CD4-positive, alpha-beta memory T cell (primary cell): ENCODE measurements at regions of chr1 and their contacts with region 1.

Region 1: GRCh38 chr1:35451125-35451528 is 106.1 kb downstream of the KIAA0319L start:
- DNase-seq: peak; percentile 66 to 75 (median 73)
- H3K4me3 ChIP-seq: no peak overlapping the region
- H3K4me3 Mint-ChIP-seq: peak overlapping the region in 5 of 8 donors; percentile 22 to 87 (median 42)
- H3K27ac ChIP-seq: no peak overlapping the region
- H3K27ac Mint-ChIP-seq: peak overlapping the region; percentile 50 to 95 (median 90)
- H3K4me1 ChIP-seq: peaks cover 26% of the 10 kb centered on the region
- H3K4me1 Mint-ChIP-seq: peaks cover 28 to 39% (median 32%) of the 10 kb centered on the region in 4 donors
- H3K27me3 ChIP-seq: no peaks in the 10 kb centered on the region
- H3K27me3 Mint-ChIP-seq: no peaks in the 10 kb centered on the region

Region 2: GRCh38 chr1:35466120-35466519 is 15.0 kb after region 1 on chr1:
- CTCF ChIA-PET with region 1: interaction called, 10 read pairs
- POLR2A ChIA-PET with region 1: interaction called, 3 read pairs
- intact Hi-C with region 1: no loop called
- DNase-seq: no peak
- H3K4me3 ChIP-seq: no peak overlapping the region
- H3K4me3 Mint-ChIP-seq: no peak overlapping the region
- H3K27ac ChIP-seq: no peak overlapping the region
- H3K27ac Mint-ChIP-seq: peak overlapping the region in 3 of 7 donors; percentile 3 to 36 (median 20)
- H3K4me1 ChIP-seq: peaks cover 10% of the 10 kb centered on the region
- H3K4me1 Mint-ChIP-seq: peaks cover 18 to 24% (median 22%) of the 10 kb centered on the region in 4 donors
- H3K27me3 ChIP-seq: no peaks in the 10 kb centered on the region
- H3K27me3 Mint-ChIP-seq: no peaks in the 10 kb centered on the region

Region 3: GRCh38 chr1:35499652-35500176 is 48.6 kb after region 1 on chr1:
- CTCF ChIA-PET with region 1: interaction called, 82 read pairs
- POLR2A ChIA-PET with region 1: interaction called, 51 read pairs
- intact Hi-C with region 1: no loop called
- DNase-seq: peak; percentile 50 to 84 (median 66)
- H3K4me3 ChIP-seq: no peak overlapping the region
- H3K4me3 Mint-ChIP-seq: peak overlapping the region in 6 of 8 donors; percentile 42 to 71 (median 46)
- H3K27ac ChIP-seq: peak overlapping the region; percentile 50
- H3K27ac Mint-ChIP-seq: peak overlapping the region; percentile 81 to 98 (median 94)
- H3K4me1 ChIP-seq: peaks cover 43% of the 10 kb centered on the region
- H3K4me1 Mint-ChIP-seq: peaks cover 42 to 56% (median 52%) of the 10 kb centered on the region in 4 donors
- H3K27me3 ChIP-seq: no peaks in the 10 kb centered on the region
- H3K27me3 Mint-ChIP-seq: no peaks in the 10 kb centered on the region

Region 4: DNA sequence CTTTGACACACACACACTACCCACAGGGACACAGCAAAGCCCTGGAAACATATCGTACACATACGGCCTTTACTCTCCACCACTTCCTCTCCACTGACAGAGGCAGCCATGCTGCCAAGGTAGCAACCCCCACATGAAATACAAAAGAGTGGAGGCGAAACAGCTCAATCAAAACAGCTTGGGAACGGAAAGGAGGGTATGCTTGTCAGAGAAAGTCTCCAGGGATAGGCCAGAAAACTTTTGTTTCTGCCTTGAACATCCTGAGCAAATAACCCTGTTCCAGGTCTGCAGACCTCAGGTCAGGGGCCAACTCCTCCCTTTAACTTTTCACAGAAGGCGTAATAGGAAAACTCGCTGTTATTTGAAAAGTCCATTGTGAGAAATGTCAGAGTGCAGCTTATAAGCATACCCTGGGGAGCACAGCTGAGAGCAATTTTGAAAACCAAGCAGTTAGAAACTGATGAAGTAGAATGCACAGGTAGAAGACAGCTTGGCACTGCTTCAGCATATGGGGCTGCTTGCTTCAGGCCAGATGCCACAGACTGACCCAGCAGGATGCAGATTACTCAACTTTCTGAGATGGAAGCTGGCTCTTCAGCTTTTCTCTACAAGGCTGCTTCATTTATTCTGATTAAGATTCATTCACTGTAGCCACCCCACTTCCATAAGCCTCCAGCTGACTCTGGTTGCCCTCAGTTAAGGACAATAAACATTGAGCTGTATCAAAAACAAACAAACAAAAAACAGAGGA is 88.1 kb after region 1 on chr1:
- CTCF ChIA-PET with region 1: interaction called, 195 read pairs
- POLR2A ChIA-PET with region 1: interaction called, 10 read pairs
- intact Hi-C with region 1: no loop called
- DNase-seq: peak; percentile 69 to 77 (median 71)
- H3K4me3 ChIP-seq: peak overlapping the region in 1 of 2 donors; percentile 19
- H3K4me3 Mint-ChIP-seq: peak overlapping the region; percentile 75 to 91 (median 80)
- H3K27ac ChIP-seq: peak overlapping the region; percentile 52
- H3K27ac Mint-ChIP-seq: peak overlapping the region; percentile 77 to 96 (median 94)
- H3K4me1 ChIP-seq: peaks cover 69% of the 10 kb centered on the region
- H3K4me1 Mint-ChIP-seq: peaks cover 58 to 90% (median 80%) of the 10 kb centered on the region in 4 donors
- H3K27me3 ChIP-seq: no peaks in the 10 kb centered on the region
- H3K27me3 Mint-ChIP-seq: no peaks in the 10 kb centered on the region

Region 5: GRCh38 chr1:35564037-35564883 is 113.1 kb after region 1 on chr1:
- CTCF ChIA-PET with region 1: interaction called, 274 read pairs
- POLR2A ChIA-PET with region 1: interaction called, 23 read pairs
- intact Hi-C with region 1: loop called (anchors 1 kb)
- DNase-seq: peak; percentile 70 to 78 (median 74)
- H3K4me3 ChIP-seq: no peak overlapping the region
- H3K4me3 Mint-ChIP-seq: peak overlapping the region in 1 of 8 donors; percentile 0
- H3K27ac ChIP-seq: no peak overlapping the region
- H3K27ac Mint-ChIP-seq: peak overlapping the region; percentile 68 to 93 (median 70)
- H3K4me1 ChIP-seq: peaks cover 3% of the 10 kb centered on the region
- H3K4me1 Mint-ChIP-seq: peaks cover 17 to 41% (median 24%) of the 10 kb centered on the region in 4 donors
- H3K27me3 ChIP-seq: no peaks in the 10 kb centered on the region
- H3K27me3 Mint-ChIP-seq: no peaks in the 10 kb centered on the region

Region 6: GRCh38 chr1:35726450-35727433 is 275.6 kb after region 1 on chr1:
- CTCF ChIA-PET with region 1: interaction called, 34 read pairs
- POLR2A ChIA-PET with region 1: no interaction called
- intact Hi-C with region 1: loop called (anchors 1 kb)
- DNase-seq: peak; percentile 43 to 59 (median 57)
- H3K4me3 ChIP-seq: no peak overlapping the region
- H3K4me3 Mint-ChIP-seq: no peak overlapping the region
- H3K27ac ChIP-seq: no peak overlapping the region
- H3K27ac Mint-ChIP-seq: peak overlapping the region in 2 of 7 donors; percentile 35 to 37
- H3K4me1 ChIP-seq: peaks cover 4% of the 10 kb centered on the region
- H3K4me1 Mint-ChIP-seq: peaks cover 0 to 6% (median 4%) of the 10 kb centered on the region in 4 donors
- H3K27me3 ChIP-seq: no peaks in the 10 kb centered on the region
- H3K27me3 Mint-ChIP-seq: no peaks in the 10 kb centered on the region